GM10248 (cell line): ENCODE measurements at regions of chr3 and their contacts with region 1.

Region 1: GRCh38 chr3:14780927-14781507 is 37.7 kb upstream of the FGD5 start:
- DNase-seq: peak; percentile 82
- CTCF ChIP-seq: peak; percentile 88

Region 2: GRCh38 chr3:14626881-14627411 is 154.1 kb before region 1 on chr3:
- CTCF ChIA-PET with region 1: interaction called, 42 read pairs
- POLR2A ChIA-PET with region 1: no interaction called
- DNase-seq: no peak
- CTCF ChIP-seq: no peak

Region 3: DNA sequence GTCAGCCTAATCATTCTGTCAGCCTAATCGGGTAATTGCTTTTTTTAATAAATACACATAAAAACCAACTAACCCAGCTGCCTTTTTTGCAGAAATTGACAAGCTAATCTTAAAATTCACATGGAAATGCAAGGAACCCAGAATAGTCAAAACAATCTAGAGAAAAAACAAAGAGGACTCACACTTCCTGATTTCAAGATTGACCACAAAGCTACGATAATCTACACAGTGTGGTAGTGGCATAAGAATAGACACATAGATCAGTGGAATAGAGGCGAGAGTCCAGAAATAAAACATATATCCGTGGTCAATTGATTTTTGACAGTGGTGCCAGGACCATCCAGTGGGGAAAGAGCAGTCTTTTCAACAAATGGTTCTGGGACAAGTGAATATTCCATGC is 108.4 kb before region 1 on chr3:
- CTCF ChIA-PET with region 1: interaction called, 233 read pairs
- POLR2A ChIA-PET with region 1: no interaction called
- DNase-seq: no peak
- CTCF ChIP-seq: no peak

Region 4: DNA sequence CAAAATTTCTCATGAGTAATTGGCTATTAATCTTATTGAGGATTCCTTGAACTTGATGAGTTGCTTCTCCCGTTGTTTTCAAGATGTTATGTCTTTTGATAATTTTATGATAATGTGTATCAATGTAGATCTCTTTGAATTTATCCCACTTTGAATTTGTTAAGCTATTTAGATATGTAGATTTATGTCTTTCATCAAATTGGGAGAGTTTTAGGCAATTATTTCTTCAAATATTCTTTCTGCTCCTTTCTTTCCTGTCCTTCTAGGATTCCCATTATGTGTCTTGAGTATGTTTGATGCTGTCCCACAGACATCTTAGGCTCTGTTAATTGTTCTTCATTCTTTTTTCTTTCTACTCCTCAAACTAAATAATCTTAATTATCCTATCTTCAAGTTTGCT is 30.4 kb before region 1 on chr3:
- CTCF ChIA-PET with region 1: interaction called, 12 read pairs
- POLR2A ChIA-PET with region 1: no interaction called
- DNase-seq: no peak
- CTCF ChIP-seq: no peak

Region 5: DNA sequence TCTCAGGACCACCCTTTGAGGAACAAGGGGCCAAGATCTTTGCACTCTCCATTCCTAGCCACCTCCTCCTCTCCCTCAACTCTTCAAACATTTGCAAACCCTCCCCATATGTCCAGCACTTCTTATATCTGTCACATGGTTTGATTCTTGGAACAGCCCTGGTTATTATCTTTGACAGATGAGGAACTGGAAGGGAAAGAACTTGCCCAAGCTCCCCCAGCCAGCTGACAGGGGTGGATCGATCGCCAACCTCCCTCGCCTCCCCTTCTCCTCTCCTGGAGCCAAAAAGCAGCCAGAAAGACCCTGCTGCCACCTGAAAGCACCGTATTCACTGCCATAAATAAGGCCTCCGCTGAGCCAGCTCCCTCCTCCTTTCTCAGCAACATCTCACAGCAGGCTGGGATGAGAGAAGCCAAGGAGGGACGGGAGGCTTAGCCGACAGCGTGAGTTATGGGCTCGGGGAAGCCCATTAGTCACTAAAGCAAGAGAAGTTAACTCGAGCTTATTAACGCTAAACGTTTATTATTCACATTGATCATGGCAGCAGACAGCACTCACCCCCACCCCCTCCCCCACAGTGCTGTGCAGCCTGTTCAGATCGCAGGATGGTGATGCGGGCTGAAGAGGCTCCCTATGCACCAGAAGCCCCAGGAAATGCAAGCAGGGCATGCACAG is 15.5 kb after region 1 on chr3:
- CTCF ChIA-PET with region 1: interaction called, 36 read pairs
- POLR2A ChIA-PET with region 1: no interaction called
- DNase-seq: no peak
- CTCF ChIP-seq: no peak